ENCODE measurements at regions of chr15 and their contacts with region 1.

Region 1: GRCh38 chr15:63122002-63122893 is 587 bp downstream of the LACTB start:
- DNase-seq: peak; percentile 75
- ATAC-seq: peak; percentile 97
- H3K4me3 ChIP-seq: peak overlapping the region; percentile 85
- H3K27ac ChIP-seq: peak overlapping the region; percentile 75
- H3K4me1 ChIP-seq: peaks cover 2% of the 10 kb centered on the region
- H3K27me3 ChIP-seq: no peaks in the 10 kb centered on the region
- CTCF ChIP-seq: no peak
- POLR2A ChIP-seq: peak; percentile 78; the same call in 1 of the 2 replicates
- RAD21 ChIP-seq: peak; percentile 19; the same call in 1 of the 2 replicates

Region 2: DNA sequence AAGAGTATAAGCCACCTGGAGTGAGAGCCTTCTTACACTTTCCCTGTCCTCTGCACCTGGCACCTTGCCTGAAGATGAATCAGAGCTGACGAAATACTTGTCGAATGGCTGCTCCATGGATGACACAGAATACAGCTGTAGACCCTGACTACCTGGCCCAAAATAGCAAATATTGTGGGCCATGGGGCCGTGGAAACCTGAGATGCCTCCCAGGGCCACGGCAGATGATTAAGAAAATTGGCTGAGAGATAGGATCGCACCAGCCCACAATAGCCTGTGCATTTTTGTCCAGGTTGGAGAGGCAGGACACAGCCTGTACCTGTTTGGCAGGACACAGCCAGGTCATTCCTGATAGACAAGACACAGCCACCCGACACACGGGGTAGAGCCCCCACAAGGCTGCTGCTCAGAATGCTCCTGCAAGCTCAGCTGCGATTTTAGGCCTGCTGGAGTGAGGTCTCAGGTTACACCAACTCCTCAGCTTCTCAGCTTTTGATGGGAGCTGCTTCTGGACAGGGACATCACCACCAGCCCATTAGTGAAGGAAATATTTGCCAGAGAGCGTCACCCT is 102.6 kb before region 1 on chr15:
- CTCF ChIA-PET with region 1: no interaction called
- POLR2A ChIA-PET with region 1: no interaction called
- dilution Hi-C with region 1: no loop called
- in situ Hi-C with region 1: no loop called
- intact Hi-C with region 1: no loop called
- DNase-seq: peak; percentile 95
- ATAC-seq: peak; percentile 52
- H3K4me3 ChIP-seq: no peak overlapping the region
- H3K27ac ChIP-seq: no peak overlapping the region
- H3K4me1 ChIP-seq: peaks cover 32% of the 10 kb centered on the region
- H3K27me3 ChIP-seq: no peaks in the 10 kb centered on the region
- CTCF ChIP-seq: no peak
- POLR2A ChIP-seq: no peak
- RAD21 ChIP-seq: no peak

Region 3: DNA sequence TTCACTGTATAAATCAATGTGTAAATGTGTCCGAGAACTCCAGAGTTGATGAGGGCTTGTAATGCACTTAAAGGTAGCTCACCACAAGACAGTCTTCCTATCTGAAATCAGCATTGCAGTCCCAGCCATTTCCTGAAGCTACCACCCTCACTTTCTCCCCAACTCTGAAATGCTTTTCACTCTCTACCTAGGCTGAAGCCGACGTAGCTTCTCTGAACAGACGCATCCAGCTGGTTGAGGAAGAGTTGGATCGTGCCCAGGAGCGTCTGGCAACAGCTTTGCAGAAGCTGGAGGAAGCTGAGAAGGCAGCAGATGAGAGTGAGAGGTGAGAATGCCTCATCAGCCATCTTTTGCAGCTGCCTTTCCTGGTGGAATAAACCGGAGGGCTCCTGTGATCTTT is 65.5 kb before region 1 on chr15:
- CTCF ChIA-PET with region 1: no interaction called
- POLR2A ChIA-PET with region 1: no interaction called
- dilution Hi-C with region 1: no loop called
- in situ Hi-C with region 1: no loop called
- intact Hi-C with region 1: loop called (anchors 5 kb)
- DNase-seq: peak; percentile 85
- ATAC-seq: no peak; the same call in 1 of the 2 replicates
- H3K4me3 ChIP-seq: no peak overlapping the region
- H3K27ac ChIP-seq: peak overlapping the region; percentile 4; the same call in 1 of the 2 replicates
- H3K4me1 ChIP-seq: peaks cover 36% of the 10 kb centered on the region
- H3K27me3 ChIP-seq: no peaks in the 10 kb centered on the region
- CTCF ChIP-seq: no peak
- POLR2A ChIP-seq: no peak
- RAD21 ChIP-seq: no peak

Region 4: DNA sequence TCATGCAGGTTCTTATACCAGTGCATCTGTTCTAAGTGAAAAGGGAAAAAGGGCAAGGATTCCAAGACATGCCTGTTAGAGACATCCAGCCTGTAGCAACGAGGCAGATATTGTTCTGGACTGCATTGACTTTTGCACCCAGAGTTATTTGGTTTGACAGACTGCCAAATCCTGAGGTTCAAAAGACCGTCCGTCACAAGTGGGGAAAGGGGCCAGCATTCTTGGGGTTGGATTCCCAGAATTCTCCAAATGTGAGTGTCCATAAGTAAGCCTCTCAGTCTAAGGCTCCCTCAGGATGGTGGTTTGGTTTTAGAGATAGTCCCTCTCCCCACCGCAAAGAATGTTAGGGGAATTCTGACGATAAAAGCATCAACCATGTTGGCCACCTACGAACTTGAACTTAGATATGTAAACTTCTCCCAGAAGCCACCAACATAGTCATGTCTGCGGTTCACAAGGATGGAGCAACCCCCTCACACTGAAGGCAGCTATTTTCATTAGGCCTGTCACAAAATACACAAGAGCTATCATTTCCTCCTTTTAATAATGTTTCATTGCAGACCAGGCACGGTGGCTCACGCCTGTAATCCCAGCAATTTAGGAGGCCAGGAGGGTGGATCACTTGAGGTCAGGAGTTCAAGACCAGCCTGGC is 14.2 kb before region 1 on chr15:
- CTCF ChIA-PET with region 1: no interaction called
- POLR2A ChIA-PET with region 1: no interaction called
- dilution Hi-C with region 1: no loop called
- in situ Hi-C with region 1: no loop called
- intact Hi-C with region 1: loop called (anchors 1 kb)
- DNase-seq: peak; percentile 100
- ATAC-seq: peak; percentile 92
- H3K4me3 ChIP-seq: no peak overlapping the region
- H3K27ac ChIP-seq: no peak overlapping the region
- H3K4me1 ChIP-seq: peaks cover 13% of the 10 kb centered on the region
- H3K27me3 ChIP-seq: no peaks in the 10 kb centered on the region
- CTCF ChIP-seq: no peak
- POLR2A ChIP-seq: no peak; the same call in 1 of the 2 replicates
- RAD21 ChIP-seq: peak; percentile 26; the same call in 1 of the 2 replicates

Region 5: DNA sequence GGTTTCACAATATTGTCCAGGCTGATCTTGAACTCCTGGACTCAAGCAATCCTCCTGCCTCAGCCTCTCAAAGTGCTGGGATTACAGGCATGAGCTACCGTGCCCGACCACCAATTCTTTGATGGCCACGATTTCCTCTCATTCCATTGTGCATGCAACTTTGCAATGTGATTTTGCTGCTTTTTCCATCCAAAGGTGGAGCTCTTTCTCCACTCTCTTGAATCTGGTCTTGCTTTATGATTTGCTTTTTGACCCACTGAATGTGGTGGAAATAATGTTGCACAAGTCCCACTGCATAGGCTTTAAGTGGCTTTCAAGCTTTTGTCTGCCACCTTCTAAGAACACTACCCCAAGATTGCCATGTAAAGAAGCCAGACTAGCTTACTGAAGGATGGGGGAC is 24.4 kb after region 1 on chr15:
- CTCF ChIA-PET with region 1: no interaction called
- POLR2A ChIA-PET with region 1: no interaction called
- dilution Hi-C with region 1: no loop called
- in situ Hi-C with region 1: no loop called
- intact Hi-C with region 1: no loop called
- DNase-seq: peak; percentile 27
- ATAC-seq: peak; percentile 6; the same call in 1 of the 2 replicates
- H3K4me3 ChIP-seq: no peak overlapping the region
- H3K27ac ChIP-seq: no peak overlapping the region
- H3K4me1 ChIP-seq: no peaks in the 10 kb centered on the region; the same call in 1 of the 2 replicates
- H3K27me3 ChIP-seq: no peaks in the 10 kb centered on the region
- CTCF ChIP-seq: peak; percentile 27; the same call in 1 of the 2 replicates
- POLR2A ChIP-seq: no peak
- RAD21 ChIP-seq: peak; percentile 23